Endothelial cell of umbilical vein (primary cell): ENCODE measurements at regions of chr21 and their contacts with region 1.

Region 1: GRCh38 chr21:16942703-16943102 is 570.1 kb upstream of the CXADR start:
- DNase-seq: peak; percentile 26
- H3K4me3 ChIP-seq: no peak overlapping the region
- H3K27ac ChIP-seq: no peak overlapping the region
- H3K4me1 ChIP-seq: no peaks in the 10 kb centered on the region
- H3K27me3 ChIP-seq: peaks cover 0 to 2% of the 10 kb centered on the region in 2 experiments
- CTCF ChIP-seq: peak in 1 of 2 donors; percentile 40
- POLR2A ChIP-seq: no peak

Region 2: GRCh38 chr21:17003763-17004373 is 61.2 kb after region 1 on chr21:
- CTCF ChIA-PET with region 1: no interaction called
- POLR2A ChIA-PET with region 1: no interaction called
- dilution Hi-C with region 1: no loop called
- intact Hi-C with region 1: no loop called
- DNase-seq: peak; percentile 16
- H3K4me3 ChIP-seq: no peak overlapping the region
- H3K27ac ChIP-seq: no peak overlapping the region
- H3K4me1 ChIP-seq: no peaks in the 10 kb centered on the region
- H3K27me3 ChIP-seq: no peaks in the 10 kb centered on the region
- CTCF ChIP-seq: no peak
- POLR2A ChIP-seq: no peak

Region 3: GRCh38 chr21:17045214-17045853 is 102.6 kb after region 1 on chr21:
- CTCF ChIA-PET with region 1: no interaction called
- POLR2A ChIA-PET with region 1: no interaction called
- dilution Hi-C with region 1: no loop called
- intact Hi-C with region 1: loop called (anchors 2 kb)
- DNase-seq: peak; percentile 37
- H3K4me3 ChIP-seq: no peak overlapping the region
- H3K27ac ChIP-seq: no peak overlapping the region
- H3K4me1 ChIP-seq: no peaks in the 10 kb centered on the region
- H3K27me3 ChIP-seq: no peaks in the 10 kb centered on the region
- CTCF ChIP-seq: peak; percentile 40 to 41
- POLR2A ChIP-seq: no peak

Region 4: DNA sequence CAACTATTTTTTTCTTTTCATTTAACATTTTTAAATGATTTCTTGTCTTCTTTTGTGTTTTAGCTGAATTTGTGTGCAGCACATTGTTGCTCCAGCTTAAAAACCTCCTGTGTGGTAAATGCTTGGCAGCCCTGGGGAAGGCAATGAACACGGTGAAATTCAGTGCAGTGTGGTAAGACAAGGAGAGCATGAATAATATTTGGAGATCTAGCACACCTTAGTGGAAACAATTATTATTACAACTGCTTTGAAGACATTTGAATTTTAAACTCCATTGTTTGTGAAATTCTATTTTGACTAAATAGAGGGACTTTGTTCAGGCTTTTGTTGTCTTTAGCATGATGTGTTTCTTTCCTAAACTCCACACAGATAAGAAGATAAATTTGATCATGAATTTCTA is 327.5 kb after region 1 on chr21:
- CTCF ChIA-PET with region 1: no interaction called
- POLR2A ChIA-PET with region 1: no interaction called
- dilution Hi-C with region 1: no loop called
- intact Hi-C with region 1: loop called (anchors 2 kb)
- DNase-seq: peak; percentile 38
- H3K4me3 ChIP-seq: no peak overlapping the region
- H3K27ac ChIP-seq: no peak overlapping the region
- H3K4me1 ChIP-seq: no peaks in the 10 kb centered on the region
- H3K27me3 ChIP-seq: no peaks in the 10 kb centered on the region
- CTCF ChIP-seq: peak; percentile 13 to 15
- POLR2A ChIP-seq: no peak